A673 (cell line): ENCODE measurements at regions of chr2 and their contacts with region 1.

Region 1: DNA sequence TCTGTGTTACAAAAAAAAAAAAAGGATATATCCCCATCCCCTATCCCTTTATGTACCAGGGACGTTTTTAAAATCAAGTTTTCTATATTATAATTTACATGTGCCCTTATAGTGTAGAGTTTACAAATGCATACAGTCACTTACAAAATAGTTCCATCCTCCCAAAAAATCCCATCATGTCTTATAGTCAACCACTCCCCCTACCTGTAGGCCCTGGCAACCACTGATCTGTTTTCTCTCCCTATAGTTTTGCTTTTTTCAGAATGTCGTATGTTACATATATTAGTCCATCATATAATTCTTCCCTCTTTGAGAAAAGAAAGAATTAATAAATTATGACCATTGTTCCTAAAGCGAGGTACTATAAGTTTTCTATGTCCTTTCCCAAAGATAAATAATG is 17.8 kb downstream of the CFAP210 start:
- DNase-seq: peak; percentile 19
- H3K4me3 ChIP-seq: no peak overlapping the region
- H3K27ac ChIP-seq: no peak overlapping the region
- H3K4me1 ChIP-seq: no peaks in the 10 kb centered on the region
- H3K27me3 ChIP-seq: no peaks in the 10 kb centered on the region
- CTCF ChIP-seq: peak; percentile 63

Region 2: DNA sequence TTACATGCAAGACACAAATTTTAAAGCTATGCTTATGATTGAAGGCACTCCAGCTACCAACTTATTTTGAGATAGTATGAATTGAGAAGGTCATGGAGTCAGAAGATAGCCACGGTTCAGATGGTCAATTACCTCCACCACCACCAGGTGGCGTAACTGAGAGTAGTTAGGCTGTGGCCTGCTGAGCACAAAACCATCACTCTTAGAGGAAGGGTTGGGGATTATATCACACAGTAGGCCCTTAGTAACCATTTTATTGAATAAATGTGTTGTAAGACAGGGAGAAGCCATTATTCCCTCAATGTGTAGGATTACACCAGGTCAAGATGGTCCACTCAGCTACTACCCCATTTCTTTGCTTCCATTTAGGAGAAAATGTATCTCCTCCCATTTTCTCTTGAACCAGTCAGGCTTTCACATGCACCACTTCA is 148.1 kb before region 1 on chr2:
- CTCF ChIA-PET with region 1: no interaction called
- POLR2A ChIA-PET with region 1: no interaction called
- intact Hi-C with region 1: loop called (anchors 2 kb)
- DNase-seq: peak; percentile 74
- H3K4me3 ChIP-seq: no peak overlapping the region
- H3K27ac ChIP-seq: no peak overlapping the region
- H3K4me1 ChIP-seq: no peaks in the 10 kb centered on the region
- H3K27me3 ChIP-seq: no peaks in the 10 kb centered on the region
- CTCF ChIP-seq: peak; percentile 89